Vagina (tissue), 2 donors: ENCODE measurements at regions of chr1 and their contacts with region 1.

Region 1: DNA sequence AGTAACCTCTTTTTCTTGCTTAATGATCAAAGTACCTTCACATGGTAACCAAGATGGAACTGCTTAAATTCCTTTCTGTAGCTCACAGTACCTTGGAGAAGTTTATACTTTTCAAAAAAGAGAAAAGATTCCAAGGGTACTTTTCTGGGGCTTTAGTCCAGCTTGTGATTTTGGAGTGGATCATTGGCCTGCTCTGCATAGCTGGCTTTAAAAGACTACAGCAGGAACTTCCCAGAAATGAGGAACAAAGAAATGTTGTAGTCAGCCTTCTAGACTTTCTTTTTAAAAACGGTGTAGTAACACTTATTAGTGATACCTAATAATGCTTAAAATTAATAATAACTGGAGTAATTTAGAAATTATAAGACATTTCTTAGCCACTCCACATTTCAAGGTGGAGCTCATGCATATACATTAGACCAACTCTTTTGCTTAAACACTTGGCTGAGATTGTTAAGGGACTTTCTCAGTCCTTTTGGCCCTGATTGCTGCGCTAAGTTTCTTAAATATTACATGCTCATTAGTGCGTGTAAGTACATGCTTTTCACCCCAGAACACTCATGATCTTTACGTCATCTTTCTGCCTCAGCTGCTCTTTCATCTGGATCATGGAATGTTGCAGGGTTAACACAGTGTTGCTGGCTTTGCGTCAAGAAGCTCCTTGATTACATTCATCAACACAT is 57.3 kb downstream of the SDCCAG8 start:
- DNase-seq: no peak
- H3K4me3 ChIP-seq: no peak overlapping the region
- H3K27ac ChIP-seq: no peak overlapping the region
- H3K4me1 ChIP-seq: no peaks in the 10 kb centered on the region
- H3K27me3 ChIP-seq: no peaks in the 10 kb centered on the region
- CTCF ChIP-seq: no peak
- POLR2A ChIP-seq: no peak

Region 2: GRCh38 chr1:242477944-242478343 is 835.1 kb before region 1 on chr1:
- intact Hi-C with region 1: loop called (anchors 10 kb)
- DNase-seq: no peak
- H3K4me3 ChIP-seq: no peak overlapping the region
- H3K27ac ChIP-seq: no peak overlapping the region
- H3K4me1 ChIP-seq: no peaks in the 10 kb centered on the region
- H3K27me3 ChIP-seq: no peaks in the 10 kb centered on the region
- CTCF ChIP-seq: no peak
- POLR2A ChIP-seq: no peak

Region 3: DNA sequence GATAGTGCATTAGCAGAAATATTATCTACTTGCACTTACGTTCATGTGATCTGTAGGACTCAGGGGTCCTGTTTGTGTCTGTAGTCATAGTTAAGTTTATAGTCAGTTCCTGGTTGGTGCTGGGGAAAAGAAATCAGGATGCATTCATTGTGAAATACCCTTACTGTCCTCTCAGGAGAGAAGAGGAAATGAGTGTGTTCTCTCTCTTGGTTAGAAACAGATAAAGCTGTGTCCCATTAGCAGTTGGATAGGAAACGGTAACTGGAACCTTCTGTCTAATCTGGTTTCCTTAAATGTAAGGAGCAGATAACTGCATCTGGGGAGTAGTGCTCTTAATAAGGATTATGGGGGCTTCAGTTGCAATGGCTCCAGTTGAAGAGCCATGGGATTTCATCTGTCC is 48.4 kb before region 1 on chr1:
- intact Hi-C with region 1: no loop called
- DNase-seq: no peak
- H3K4me3 ChIP-seq: no peak overlapping the region
- H3K27ac ChIP-seq: no peak overlapping the region
- H3K4me1 ChIP-seq: peaks cover 25% of the 10 kb centered on the region
- H3K27me3 ChIP-seq: no peaks in the 10 kb centered on the region
- CTCF ChIP-seq: no peak
- POLR2A ChIP-seq: no peak

Region 4: DNA sequence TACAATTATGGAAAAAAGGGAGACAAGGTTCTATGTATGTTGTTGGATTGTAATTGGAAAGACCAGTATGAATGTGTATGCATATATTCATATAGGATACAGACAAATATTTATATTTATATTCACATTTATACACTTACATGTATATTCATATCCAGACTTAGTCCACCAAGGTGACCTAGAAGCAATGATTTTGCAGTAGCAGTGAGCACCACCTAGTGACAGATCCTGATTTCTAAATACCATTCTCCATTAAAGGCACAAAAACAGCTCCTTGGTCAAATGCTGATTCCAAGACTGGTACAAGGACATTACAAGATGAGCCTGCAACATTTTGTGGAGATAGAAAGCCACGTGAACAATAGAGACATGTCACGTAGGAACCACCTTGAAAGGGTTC is 96.2 kb after region 1 on chr1:
- intact Hi-C with region 1: no loop called
- DNase-seq: no peak
- H3K4me3 ChIP-seq: no peak overlapping the region
- H3K27ac ChIP-seq: no peak overlapping the region
- H3K4me1 ChIP-seq: no peaks in the 10 kb centered on the region
- H3K27me3 ChIP-seq: no peaks in the 10 kb centered on the region
- CTCF ChIP-seq: no peak
- POLR2A ChIP-seq: no peak

Region 5: GRCh38 chr1:243459059-243459458 is 146.0 kb after region 1 on chr1:
- intact Hi-C with region 1: no loop called
- DNase-seq: no peak
- H3K4me3 ChIP-seq: no peak overlapping the region
- H3K27ac ChIP-seq: no peak overlapping the region
- H3K4me1 ChIP-seq: no peaks in the 10 kb centered on the region
- H3K27me3 ChIP-seq: no peaks in the 10 kb centered on the region
- CTCF ChIP-seq: no peak
- POLR2A ChIP-seq: no peak

Region 6: DNA sequence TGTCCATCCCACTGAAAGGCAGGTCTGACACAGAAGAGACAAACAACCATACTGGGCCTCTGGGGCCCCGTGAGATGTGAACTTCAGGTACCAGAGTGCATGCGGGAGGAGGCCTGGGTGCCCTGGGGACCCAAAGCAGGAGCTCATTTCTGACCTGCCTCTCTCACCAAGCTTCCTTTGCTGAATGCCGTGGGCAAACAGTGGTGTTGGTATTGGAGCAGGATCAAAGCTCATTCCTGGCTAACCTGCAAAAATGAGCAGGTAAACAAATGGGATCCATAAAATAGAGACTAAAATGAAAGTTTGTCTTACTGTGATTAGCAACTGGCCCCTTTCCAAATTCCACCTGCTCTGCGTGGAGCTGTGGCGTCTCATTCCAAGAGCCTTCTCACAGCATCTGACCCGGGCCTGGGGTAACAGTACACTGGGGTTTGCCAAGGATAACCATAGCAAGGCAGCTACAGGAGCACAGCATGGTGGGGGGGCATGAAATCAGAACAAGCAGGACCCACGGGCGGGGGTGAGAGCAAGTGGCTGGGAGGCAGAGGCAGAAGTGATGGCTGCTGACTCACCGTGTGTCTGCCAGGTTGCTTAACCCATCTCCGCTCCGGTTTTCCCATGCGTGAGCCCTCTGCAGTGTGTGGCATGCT is 1945.3 kb after region 1 on chr1:
- intact Hi-C with region 1: no loop called
- DNase-seq: peak in 1 of 2 donors; percentile 90
- H3K4me3 ChIP-seq: no peak overlapping the region
- H3K27ac ChIP-seq: no peak overlapping the region
- H3K4me1 ChIP-seq: no peaks in the 10 kb centered on the region
- H3K27me3 ChIP-seq: no peaks in the 10 kb centered on the region
- CTCF ChIP-seq: no peak
- POLR2A ChIP-seq: no peak